Heart left ventricle (tissue), 16 donors: ENCODE measurements at regions of chr18 and their contacts with region 1.

Region 1: DNA sequence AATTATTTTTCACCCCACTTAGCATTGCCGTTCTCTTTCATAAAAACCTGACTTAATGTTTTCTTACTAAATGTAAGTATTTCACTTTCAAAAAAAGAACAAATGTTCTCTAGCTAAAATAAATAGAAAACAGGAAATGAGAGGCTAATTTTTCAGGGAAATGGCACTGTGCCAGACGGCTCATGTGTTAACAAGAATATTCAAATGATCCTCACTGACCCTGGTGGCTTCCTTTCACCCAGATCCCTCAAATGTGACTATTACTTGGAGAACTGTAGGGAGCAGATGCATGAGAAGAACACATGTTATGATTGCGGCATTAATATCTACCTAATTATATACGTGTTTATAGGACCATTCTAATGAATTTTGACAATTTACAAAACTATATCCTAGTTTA is 827.7 kb downstream of the SOCS6 start:
- DNase-seq: peak in 2 of 5 donors; percentile 15 to 25
- ATAC-seq: no peak
- H3K4me3 ChIP-seq: no peak overlapping the region
- H3K27ac ChIP-seq: no peak overlapping the region
- H3K4me1 ChIP-seq: no peaks in the 10 kb centered on the region
- H3K27me3 ChIP-seq: no peaks in the 10 kb centered on the region
- CTCF ChIP-seq: no peak
- POLR2A ChIP-seq: no peak

Region 2: DNA sequence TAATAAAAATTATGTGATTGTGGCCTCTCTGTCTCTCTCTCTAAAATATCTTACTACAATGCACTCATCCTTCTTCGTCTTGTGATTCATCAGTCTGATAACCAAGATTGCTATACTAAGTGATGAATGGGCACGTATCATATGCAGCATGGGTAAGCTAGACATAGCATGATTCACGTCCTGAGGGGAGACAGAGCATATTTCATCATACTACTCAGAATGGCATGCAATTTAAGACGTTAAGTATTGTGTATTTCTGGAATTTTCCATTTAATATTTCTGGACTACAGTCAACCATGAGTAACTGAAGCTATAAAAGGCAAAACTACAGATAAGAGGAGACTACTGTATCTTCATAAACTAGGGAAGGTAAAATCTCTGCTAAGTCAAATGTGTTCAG is 1071.9 kb before region 1 on chr18:
- intact Hi-C with region 1: no loop called
- DNase-seq: no peak
- ATAC-seq: peak in 1 of 4 donors; percentile 74
- H3K4me3 ChIP-seq: no peak overlapping the region
- H3K27ac ChIP-seq: peak overlapping the region in 1 of 12 donors; percentile 10
- H3K4me1 ChIP-seq: peaks cover 0 to 19% (median 3%) of the 10 kb centered on the region in 12 donors
- H3K27me3 ChIP-seq: no peaks in the 10 kb centered on the region
- CTCF ChIP-seq: no peak
- POLR2A ChIP-seq: no peak

Region 3: GRCh38 chr18:71168557-71169145 is 52.1 kb after region 1 on chr18:
- intact Hi-C with region 1: loop called in 1 of 10 experiments (anchors 10 kb)
- DNase-seq: no peak
- ATAC-seq: no peak
- H3K4me3 ChIP-seq: no peak overlapping the region
- H3K27ac ChIP-seq: no peak overlapping the region
- H3K4me1 ChIP-seq: no peaks in the 10 kb centered on the region
- H3K27me3 ChIP-seq: no peaks in the 10 kb centered on the region
- CTCF ChIP-seq: no peak
- POLR2A ChIP-seq: no peak

Region 4: GRCh38 chr18:71327850-71328249 is 211.3 kb after region 1 on chr18:
- intact Hi-C with region 1: no loop called
- DNase-seq: no peak
- ATAC-seq: no peak
- H3K4me3 ChIP-seq: no peak overlapping the region
- H3K27ac ChIP-seq: no peak overlapping the region
- H3K4me1 ChIP-seq: no peaks in the 10 kb centered on the region
- H3K27me3 ChIP-seq: no peaks in the 10 kb centered on the region
- CTCF ChIP-seq: no peak
- POLR2A ChIP-seq: no peak

Region 5: GRCh38 chr18:71503222-71503621 is 386.7 kb after region 1 on chr18:
- intact Hi-C with region 1: no loop called
- DNase-seq: no peak
- ATAC-seq: no peak
- H3K4me3 ChIP-seq: no peak overlapping the region
- H3K27ac ChIP-seq: no peak overlapping the region
- H3K4me1 ChIP-seq: no peaks in the 10 kb centered on the region
- H3K27me3 ChIP-seq: no peaks in the 10 kb centered on the region
- CTCF ChIP-seq: no peak
- POLR2A ChIP-seq: no peak